ENCODE measurements at regions of chr9 and their contacts with region 1.

Region 1: DNA sequence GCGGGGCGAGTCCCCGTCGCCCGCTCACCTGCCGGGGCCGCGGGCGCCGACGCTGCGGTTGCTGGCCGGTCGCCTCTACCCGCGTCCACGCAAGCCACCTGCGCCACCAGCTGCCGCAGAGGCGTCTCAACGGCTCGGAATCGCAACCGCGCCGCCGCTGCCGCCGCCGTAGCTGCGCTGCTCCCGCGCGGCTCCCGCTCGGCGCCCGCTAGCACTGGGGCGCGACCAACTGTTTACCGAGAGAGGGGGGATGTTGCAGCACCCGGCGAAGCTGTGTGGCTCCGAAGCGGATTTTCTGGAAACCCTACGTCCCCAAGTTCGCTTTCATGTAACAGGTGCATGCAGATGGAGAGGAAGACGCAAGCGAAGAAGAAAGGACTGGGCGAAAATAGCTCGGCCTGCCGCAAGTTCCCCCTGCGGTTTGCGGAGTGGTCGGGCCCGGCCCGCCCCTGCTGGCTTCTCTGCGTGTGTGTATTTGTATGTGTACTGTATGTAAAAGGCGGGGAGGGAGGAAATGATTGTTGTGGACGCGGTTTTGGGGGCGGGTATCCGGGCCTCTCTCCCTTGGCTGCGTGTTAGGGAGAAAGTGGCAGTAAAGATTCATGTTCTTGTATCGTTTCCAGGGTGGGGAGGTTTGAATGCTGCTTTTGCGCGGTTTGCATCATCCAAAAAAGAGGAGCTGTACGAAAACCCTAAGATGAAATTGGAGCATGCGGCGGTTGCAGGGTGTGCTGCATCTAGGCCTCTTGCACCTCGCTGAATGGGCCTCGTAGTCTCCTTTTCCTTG is at the start of gene PSIP1:
- DNase-seq: peak; percentile 87
- H3K4me3 Mint-ChIP-seq: peak within 1 kb of the TSS; percentile 90
- H3K27ac Mint-ChIP-seq: peak within 1 kb of the TSS; percentile 98
- H3K4me1 Mint-ChIP-seq: peaks cover 46% of the 10 kb centered on the region
- H3K27me3 Mint-ChIP-seq: no peaks in the 10 kb centered on the region
- total RNA-seq, gene PSIP1: 112 and 118 TPM in 2 replicates

Region 2: DNA sequence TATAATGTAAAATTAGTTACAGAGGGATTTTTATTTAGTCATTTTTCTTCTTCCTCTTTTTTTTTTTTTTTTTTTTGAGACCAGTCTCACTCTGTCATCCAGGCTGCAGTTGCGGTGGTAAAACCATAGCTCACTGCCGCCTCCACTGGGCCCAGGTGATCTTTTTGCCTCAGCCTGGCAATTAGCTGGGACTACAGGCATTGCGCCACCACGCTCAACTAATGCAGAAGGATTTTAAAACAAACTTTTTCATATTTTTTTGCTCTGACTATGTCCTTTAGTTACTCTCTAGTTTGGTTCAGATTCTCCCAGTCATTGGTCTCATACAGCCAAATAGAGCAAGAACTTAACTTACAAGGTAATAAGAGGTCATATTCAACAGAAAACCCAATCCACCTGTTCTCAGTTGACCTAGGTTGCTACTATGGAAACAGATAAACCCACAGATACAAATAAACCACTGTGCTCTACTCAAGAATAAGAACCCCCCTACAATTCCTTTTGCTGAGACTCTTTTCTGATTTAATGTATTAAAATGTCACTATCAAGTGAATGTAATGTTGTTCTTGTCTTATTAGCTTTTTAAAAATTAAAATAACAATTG is 153.8 kb before region 1 on chr9:
- intact Hi-C with region 1: loop called (anchors 10 kb)
- DNase-seq: peak; percentile 34
- H3K4me3 Mint-ChIP-seq: no peak overlapping the region
- H3K27ac Mint-ChIP-seq: no peak overlapping the region
- H3K4me1 Mint-ChIP-seq: peaks cover 16% of the 10 kb centered on the region
- H3K27me3 Mint-ChIP-seq: no peaks in the 10 kb centered on the region

Region 3: DNA sequence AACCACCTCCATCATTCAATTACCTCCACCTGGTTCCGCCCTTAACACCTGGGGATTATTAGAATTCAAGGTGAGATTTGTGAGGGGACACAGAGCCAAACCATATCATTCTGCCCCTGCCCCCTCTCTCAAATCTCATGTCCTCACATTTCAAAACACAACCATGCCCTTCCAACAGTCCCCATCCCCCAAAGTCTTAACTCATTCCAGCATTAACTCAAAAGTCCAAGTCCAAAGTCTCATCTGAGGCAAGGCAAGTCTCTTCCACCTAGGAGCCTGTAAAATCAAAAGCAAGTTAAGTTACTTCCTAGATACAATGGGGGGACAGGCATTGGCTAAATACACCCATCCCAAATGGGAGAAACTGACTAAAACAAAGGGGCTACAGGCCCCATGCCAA is 19.0 kb before region 1 on chr9:
- intact Hi-C with region 1: loop called (anchors 2 kb)
- DNase-seq: no peak
- H3K4me3 Mint-ChIP-seq: no peak overlapping the region
- H3K27ac Mint-ChIP-seq: no peak overlapping the region
- H3K4me1 Mint-ChIP-seq: peaks cover 9% of the 10 kb centered on the region
- H3K27me3 Mint-ChIP-seq: no peaks in the 10 kb centered on the region

Region 4: DNA sequence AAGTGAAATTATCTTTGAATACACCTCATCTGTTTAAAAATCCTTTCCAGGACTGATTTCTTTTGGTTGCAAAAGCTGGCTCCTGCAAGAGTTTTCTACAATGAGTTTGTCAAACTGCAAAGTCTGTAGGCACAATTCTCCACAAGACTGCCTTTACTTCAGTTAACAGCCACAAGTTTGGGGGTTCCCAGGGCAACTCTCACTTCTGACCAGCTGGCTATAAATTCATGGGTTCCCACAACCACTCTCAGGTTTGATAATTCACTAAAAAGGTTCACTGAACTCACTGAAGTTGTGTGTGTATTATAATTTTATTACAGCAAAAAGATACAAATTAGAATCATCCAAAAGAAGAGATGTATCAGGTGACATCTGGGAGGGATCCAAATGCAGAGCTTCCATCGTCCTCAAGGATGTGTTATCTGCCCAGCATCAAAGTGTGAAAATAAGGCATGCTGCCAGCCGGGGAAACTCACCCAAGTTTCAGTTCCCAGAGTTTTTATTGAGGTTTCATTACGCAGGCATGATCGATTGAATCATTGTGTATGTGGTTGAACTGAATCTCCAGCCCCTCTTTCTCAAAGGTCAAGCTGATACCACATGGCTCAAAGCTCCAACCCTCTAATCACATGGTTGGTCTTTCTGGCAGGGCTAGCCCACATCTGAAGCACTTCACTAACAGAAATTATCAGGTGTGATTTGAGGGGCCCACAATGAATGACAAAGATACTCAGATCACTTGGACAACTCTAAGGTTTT is 18.8 kb after region 1 on chr9:
- intact Hi-C with region 1: loop called (anchors 2 kb)
- DNase-seq: no peak
- H3K4me3 Mint-ChIP-seq: no peak overlapping the region
- H3K27ac Mint-ChIP-seq: no peak overlapping the region
- H3K4me1 Mint-ChIP-seq: peaks cover 10% of the 10 kb centered on the region
- H3K27me3 Mint-ChIP-seq: peaks cover 5% of the 10 kb centered on the region

Region 5: DNA sequence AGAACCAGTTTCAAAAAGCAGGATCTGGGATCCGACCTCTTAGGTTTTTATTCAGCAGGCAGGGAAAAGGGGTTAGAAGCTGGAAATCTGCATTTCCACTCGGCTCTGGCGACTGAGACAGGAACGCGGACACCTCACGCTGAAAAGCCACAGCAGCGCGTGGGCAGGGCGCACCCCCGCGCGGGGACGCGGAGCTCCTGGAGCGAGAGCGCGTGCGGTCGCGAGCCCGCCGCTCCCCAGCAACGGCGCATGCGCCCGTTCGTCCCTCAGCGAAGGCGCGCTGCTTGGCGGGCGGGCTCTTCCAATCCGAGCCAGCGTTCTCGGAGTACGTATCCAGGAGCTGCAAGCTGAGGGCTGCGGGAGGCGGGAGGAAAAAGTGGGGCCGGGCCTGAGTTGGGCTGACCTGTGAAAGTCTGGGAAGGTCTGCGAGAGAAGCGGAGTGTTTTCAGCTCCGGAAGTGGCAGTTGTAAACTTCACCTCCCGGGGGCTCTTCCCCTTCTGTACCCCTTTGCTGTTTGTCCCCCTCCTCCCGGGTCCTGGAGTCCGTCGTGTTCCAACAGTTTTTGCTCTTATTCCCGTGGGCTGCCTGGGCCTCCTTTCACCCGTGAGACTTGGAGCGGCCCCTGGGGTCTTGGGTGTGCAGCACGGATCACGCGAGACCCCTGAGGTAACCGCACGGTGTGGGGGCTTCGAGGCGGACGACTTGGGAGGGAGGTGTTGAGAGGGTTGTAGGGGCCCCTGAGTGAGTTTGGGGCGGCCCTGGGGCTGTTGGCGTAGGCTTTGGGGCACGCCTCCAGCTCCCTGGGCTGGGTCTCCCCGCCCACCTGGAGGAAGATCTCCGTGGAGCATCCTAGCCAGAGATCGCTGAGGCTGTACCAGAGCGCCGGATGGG is 41.9 kb after region 1 on chr9 and contains the start of gene CCDC171:
- intact Hi-C with region 1: loop called (anchors 1 kb)
- DNase-seq: peak; percentile 84
- H3K4me3 Mint-ChIP-seq: peak within 1 kb of the TSS; percentile 87
- H3K27ac Mint-ChIP-seq: peak within 1 kb of the TSS; percentile 73
- H3K4me1 Mint-ChIP-seq: peaks cover 9% of the 10 kb centered on the region
- H3K27me3 Mint-ChIP-seq: peaks cover 14% of the 10 kb centered on the region
- total RNA-seq, gene CCDC171: 1.8 and 2.0 TPM in 2 replicates

Region 6: GRCh38 chr9:15927161-15927560 is 416.2 kb after region 1 on chr9:
- intact Hi-C with region 1: no loop called
- DNase-seq: no peak
- H3K4me3 Mint-ChIP-seq: no peak overlapping the region
- H3K27ac Mint-ChIP-seq: no peak overlapping the region
- H3K4me1 Mint-ChIP-seq: no peaks in the 10 kb centered on the region
- H3K27me3 Mint-ChIP-seq: no peaks in the 10 kb centered on the region

Region 7: DNA sequence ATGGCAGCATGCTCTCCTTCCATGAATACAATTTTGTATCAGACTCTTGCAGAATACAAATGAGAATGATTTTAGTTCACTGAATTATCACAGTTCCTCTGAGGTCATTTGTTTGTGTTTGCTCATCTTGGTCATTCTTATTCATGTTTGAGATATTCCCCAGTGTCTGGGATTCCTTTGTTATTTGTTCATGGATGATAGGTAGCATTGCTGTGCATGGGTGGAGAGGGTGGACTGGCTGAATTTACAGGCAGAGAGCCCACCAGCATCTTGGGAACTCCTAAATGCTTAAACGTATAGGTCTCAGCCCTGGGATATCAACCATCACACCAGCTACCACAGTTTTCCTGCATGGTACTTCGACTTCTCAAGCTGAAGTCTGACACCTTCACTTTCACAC is 501.6 kb after region 1 on chr9:
- intact Hi-C with region 1: no loop called
- DNase-seq: no peak
- H3K4me3 Mint-ChIP-seq: no peak overlapping the region
- H3K27ac Mint-ChIP-seq: no peak overlapping the region
- H3K4me1 Mint-ChIP-seq: no peaks in the 10 kb centered on the region
- H3K27me3 Mint-ChIP-seq: no peaks in the 10 kb centered on the region